ENCODE measurements at regions of chr15 and their contacts with region 1.

Region 1: GRCh38 chr15:85044251-85044853 is 62.7 kb downstream of the PDE8A start:
- DNase-seq: peak; percentile 39
- H3K4me3 ChIP-seq: no peak overlapping the region
- H3K27ac ChIP-seq: no peak overlapping the region; a peak in 1 of 4 replicates
- H3K4me1 ChIP-seq: peaks cover 13 to 30% of the 10 kb centered on the region in 2 experiments
- H3K27me3 ChIP-seq: no peaks in the 10 kb centered on the region
- CTCF ChIP-seq: peak; percentile 69
- EP300 ChIP-seq: peak in 1 of 2 experiments; percentile 45; a peak in 1 of 4 replicates
- RAD21 ChIP-seq: peak; percentile 86

Region 2: DNA sequence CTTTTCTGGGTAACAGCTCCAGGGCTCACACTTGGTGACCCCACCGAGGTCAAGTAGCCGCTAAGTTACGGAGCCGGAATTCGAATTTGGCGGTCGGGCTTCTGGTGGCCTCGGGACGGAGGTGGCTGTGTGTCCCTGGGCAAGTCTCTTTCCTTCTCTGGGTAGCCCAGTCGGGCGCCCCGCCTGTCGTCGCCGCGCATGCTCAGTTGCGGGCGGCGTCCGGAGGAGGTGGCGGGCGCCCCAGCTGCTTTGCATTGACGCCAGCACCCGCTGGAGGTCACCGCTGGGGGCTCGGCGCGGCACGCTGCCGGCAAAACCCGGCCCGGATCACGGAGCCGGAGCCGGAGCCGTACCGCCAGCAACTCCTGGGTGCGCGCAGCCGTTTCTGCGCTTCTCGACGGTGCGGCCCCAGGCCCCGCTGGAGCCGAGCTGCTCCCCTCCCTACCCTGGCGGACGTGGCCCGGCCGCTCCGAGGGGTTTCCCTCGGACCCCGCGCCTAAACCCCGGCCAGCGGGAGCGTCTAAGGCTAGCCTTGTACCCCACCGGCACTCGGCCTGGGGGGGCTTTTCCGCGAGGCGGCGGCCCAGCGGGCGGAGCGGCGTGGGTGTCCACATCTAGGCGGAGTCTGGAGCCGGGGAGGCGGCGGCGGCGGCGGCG is 63.2 kb before region 1 on chr15:
- CTCF ChIA-PET with region 1: interaction called, 19 read pairs
- POLR2A ChIA-PET with region 1: no interaction called
- DNase-seq: peak; percentile 100
- H3K4me3 ChIP-seq: peak overlapping the region; percentile 87 to 88
- H3K27ac ChIP-seq: peak overlapping the region; percentile 88 to 89
- H3K4me1 ChIP-seq: peaks cover 0 to 7% of the 10 kb centered on the region in 2 experiments; a peak in 3 of 4 replicates
- H3K27me3 ChIP-seq: no peaks in the 10 kb centered on the region
- CTCF ChIP-seq: no peak
- EP300 ChIP-seq: peak; percentile 59 to 64; a peak in 3 of 4 replicates
- RAD21 ChIP-seq: no peak

Region 3: DNA sequence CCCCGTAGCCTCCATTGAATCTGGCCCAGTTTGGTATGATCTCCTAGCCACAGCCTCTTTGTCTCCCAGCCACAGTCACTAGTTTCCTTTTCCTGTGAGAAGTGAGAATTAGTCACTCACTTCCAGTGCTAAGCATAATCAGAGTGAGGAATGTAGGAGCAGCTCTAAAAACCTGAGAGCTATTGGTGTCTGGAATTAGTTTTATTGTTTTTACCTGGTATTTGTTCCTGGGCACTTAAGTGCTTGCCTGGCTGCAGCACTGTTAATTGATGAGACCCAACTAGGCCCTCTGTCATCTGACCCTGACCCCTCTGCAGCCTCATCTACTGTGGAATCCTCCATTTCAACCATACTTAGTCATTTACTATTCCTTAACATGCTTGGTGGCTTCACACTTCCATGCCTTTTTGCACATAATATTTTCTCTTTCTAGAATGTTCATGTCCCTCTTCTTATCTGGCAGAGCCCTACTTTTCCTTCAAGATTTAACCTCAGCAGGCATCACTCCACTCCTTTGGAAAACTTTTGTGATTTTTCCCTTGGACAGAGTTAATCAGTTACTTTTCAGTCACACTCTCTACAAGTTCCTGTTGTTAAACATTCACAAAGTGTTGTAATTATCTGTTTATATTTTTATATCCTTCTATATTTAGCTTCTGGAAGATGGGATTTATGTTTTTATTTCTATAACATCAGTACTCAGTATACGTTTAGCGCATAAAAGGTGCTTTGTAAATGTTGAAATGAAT is 13.9 kb before region 1 on chr15:
- CTCF ChIA-PET with region 1: interaction called, 26 read pairs
- POLR2A ChIA-PET with region 1: no interaction called
- DNase-seq: no peak
- H3K4me3 ChIP-seq: no peak overlapping the region
- H3K27ac ChIP-seq: peak overlapping the region in 1 of 2 experiments; percentile 35; a peak in 3 of 4 replicates
- H3K4me1 ChIP-seq: peaks cover 24 to 40% of the 10 kb centered on the region in 2 experiments
- H3K27me3 ChIP-seq: no peaks in the 10 kb centered on the region
- CTCF ChIP-seq: no peak
- EP300 ChIP-seq: no peak
- RAD21 ChIP-seq: no peak

Region 4: GRCh38 chr15:85109333-85109732 is 65.0 kb after region 1 on chr15:
- CTCF ChIA-PET with region 1: no interaction called
- POLR2A ChIA-PET with region 1: no interaction called
- DNase-seq: no peak
- H3K4me3 ChIP-seq: no peak overlapping the region
- H3K27ac ChIP-seq: no peak overlapping the region
- H3K4me1 ChIP-seq: no peaks in the 10 kb centered on the region
- H3K27me3 ChIP-seq: no peaks in the 10 kb centered on the region
- CTCF ChIP-seq: no peak
- EP300 ChIP-seq: no peak
- RAD21 ChIP-seq: no peak

Region 5: GRCh38 chr15:85534031-85534430 is 489.7 kb after region 1 on chr15:
- CTCF ChIA-PET with region 1: no interaction called
- POLR2A ChIA-PET with region 1: no interaction called
- DNase-seq: no peak
- H3K4me3 ChIP-seq: no peak overlapping the region
- H3K27ac ChIP-seq: no peak overlapping the region
- H3K4me1 ChIP-seq: peaks cover 0 to 5% of the 10 kb centered on the region in 2 experiments; a peak in 1 of 4 replicates
- H3K27me3 ChIP-seq: no peaks in the 10 kb centered on the region
- CTCF ChIP-seq: no peak
- EP300 ChIP-seq: no peak
- RAD21 ChIP-seq: no peak

Measured in SK-N-SH (cell line).